Activated naive CD4-positive, alpha-beta T cell treated with anti-CD3 and anti-CD28 coated beads for 36 hours (primary cell): ENCODE measurements at regions of chr13 and their contacts with region 1.

Region 1: DNA sequence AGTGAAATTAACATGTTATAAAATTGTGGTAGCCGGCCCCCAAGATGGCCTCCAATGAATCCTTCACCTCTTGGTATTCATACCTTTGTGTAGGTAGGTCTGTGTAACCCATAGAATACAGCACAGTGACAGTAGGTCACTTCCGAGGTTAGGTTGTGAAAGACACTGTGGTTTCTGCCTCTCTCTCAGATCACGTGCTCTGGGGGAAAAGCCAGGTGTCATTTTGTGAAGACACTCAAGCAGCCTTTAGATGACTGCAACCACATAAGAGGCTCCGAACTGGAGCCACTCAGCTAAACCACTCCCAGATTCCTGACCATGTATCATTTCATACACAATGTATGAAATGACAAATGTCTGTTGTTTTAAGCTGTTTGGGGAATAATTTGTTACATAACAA is 9.8 kb upstream of the USPL1 start:
- DNase-seq: peak; percentile 81
- H3K4me3 Mint-ChIP-seq: no peak overlapping the region
- H3K27ac Mint-ChIP-seq: no peak overlapping the region
- H3K4me1 Mint-ChIP-seq: peaks cover 24% of the 10 kb centered on the region
- H3K27me3 Mint-ChIP-seq: no peaks in the 10 kb centered on the region

Region 2: GRCh38 chr13:30572859-30573275 is 35.0 kb before region 1 on chr13:
- CTCF ChIA-PET with region 1: no interaction called
- intact Hi-C with region 1: loop called (anchors 2 kb)
- DNase-seq: peak; percentile 29
- H3K4me3 Mint-ChIP-seq: peak overlapping the region; percentile 41
- H3K27ac Mint-ChIP-seq: peak overlapping the region; percentile 12
- H3K4me1 Mint-ChIP-seq: peaks cover 33% of the 10 kb centered on the region
- H3K27me3 Mint-ChIP-seq: no peaks in the 10 kb centered on the region

Region 3: DNA sequence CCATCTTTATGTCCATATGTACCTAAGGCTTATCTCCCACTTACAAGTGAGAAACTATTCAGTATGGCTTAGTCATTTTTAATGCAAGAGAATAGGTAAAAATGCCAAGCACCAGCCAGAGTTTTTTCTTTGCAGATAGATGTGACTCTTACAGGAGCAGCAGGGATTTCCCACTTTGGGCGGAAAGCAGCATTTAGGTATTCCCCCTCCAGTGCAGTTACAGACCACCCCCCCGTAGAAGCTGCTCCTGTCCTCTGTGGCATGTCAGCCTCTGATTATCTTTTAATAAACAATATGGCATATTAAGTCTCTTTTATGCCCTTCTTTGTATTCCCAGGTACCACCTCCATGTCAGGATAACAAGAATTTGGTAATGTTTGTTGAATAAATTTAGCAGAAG is 14.9 kb before region 1 on chr13:
- CTCF ChIA-PET with region 1: no interaction called
- intact Hi-C with region 1: no loop called
- DNase-seq: no peak
- H3K4me3 Mint-ChIP-seq: no peak overlapping the region
- H3K27ac Mint-ChIP-seq: no peak overlapping the region
- H3K4me1 Mint-ChIP-seq: no peaks in the 10 kb centered on the region
- H3K27me3 Mint-ChIP-seq: peaks cover 2% of the 10 kb centered on the region